AG04449 (cell line): ENCODE measurements at regions of chr20 and their contacts with region 1.

Region 1: DNA sequence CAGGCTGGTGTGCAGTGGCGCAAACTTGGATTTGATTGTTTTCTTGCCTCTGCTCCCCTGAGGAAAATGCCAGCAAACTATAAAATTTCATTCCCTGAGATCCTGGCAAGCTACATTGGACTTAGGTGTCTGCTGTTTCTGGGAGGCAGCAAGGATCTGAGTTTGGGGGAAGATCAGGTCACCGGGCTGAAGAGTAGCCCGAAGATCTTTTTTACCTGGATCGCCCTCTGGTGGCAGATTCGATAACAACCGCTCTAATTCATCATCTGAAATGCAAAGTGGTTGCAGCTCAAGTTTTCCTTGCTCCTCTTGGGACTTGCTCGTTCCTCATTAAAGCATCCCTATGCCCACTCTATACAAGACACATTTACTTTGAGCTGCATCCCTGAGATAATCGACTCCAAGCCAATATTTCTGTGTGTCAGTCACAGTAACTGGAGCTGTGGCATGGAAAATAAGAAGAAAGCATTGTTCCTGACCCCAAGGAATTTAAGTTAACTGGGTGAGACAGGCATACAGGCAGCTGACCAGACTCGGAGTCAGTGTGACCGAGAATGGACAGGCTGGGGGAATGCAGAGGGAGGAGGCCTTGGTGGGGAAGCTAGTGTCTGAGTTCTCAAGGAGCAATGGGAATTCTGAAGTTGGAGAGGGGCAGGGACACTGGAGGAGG is 131.8 kb upstream of the PROKR2 start:
- DNase-seq: no peak
- H3K4me3 ChIP-seq: no peak overlapping the region
- CTCF ChIP-seq: peak; percentile 64

Region 2: GRCh38 chr20:5205348-5206210 is 243.0 kb before region 1 on chr20:
- CTCF ChIA-PET with region 1: interaction called, 167 read pairs
- POLR2A ChIA-PET with region 1: no interaction called
- DNase-seq: no peak
- H3K4me3 ChIP-seq: no peak overlapping the region
- CTCF ChIP-seq: peak; percentile 95

Region 3: GRCh38 chr20:5215672-5216304 is 232.8 kb before region 1 on chr20:
- CTCF ChIA-PET with region 1: interaction called, 24 read pairs
- POLR2A ChIA-PET with region 1: no interaction called
- DNase-seq: no peak
- H3K4me3 ChIP-seq: no peak overlapping the region
- CTCF ChIP-seq: no peak

Region 4: GRCh38 chr20:5222919-5223634 is 225.5 kb before region 1 on chr20:
- CTCF ChIA-PET with region 1: interaction called, 16 read pairs
- POLR2A ChIA-PET with region 1: no interaction called
- DNase-seq: peak; percentile 4
- H3K4me3 ChIP-seq: no peak overlapping the region
- CTCF ChIP-seq: peak; percentile 88

Region 5: GRCh38 chr20:5430670-5431069 is 17.9 kb before region 1 on chr20:
- CTCF ChIA-PET with region 1: interaction called, 24 read pairs
- POLR2A ChIA-PET with region 1: interaction called, 3 read pairs
- DNase-seq: no peak
- H3K4me3 ChIP-seq: no peak overlapping the region
- CTCF ChIP-seq: no peak

Region 6: GRCh38 chr20:5806457-5807263 is 358.1 kb after region 1 on chr20:
- CTCF ChIA-PET with region 1: no interaction called
- POLR2A ChIA-PET with region 1: no interaction called
- DNase-seq: no peak
- H3K4me3 ChIP-seq: no peak overlapping the region
- CTCF ChIP-seq: no peak